Heart left ventricle (tissue), 16 donors: ENCODE measurements at regions of chr2 and their contacts with region 1.

Region 1: GRCh38 chr2:136025057-136025973 is 39.9 kb upstream of the DARS1 start:
- DNase-seq: peak; percentile 82 to 86 (median 84)
- ATAC-seq: peak; percentile 93 to 99 (median 98)
- H3K4me3 ChIP-seq: peak overlapping the region in 7 of 12 donors; percentile 0 to 34 (median 18)
- H3K27ac ChIP-seq: peak overlapping the region in 7 of 12 donors; percentile 17 to 63 (median 31)
- H3K4me1 ChIP-seq: peaks cover 0 to 20% (median 2%) of the 10 kb centered on the region in 12 donors
- H3K27me3 ChIP-seq: no peaks in the 10 kb centered on the region
- CTCF ChIP-seq: no peak
- POLR2A ChIP-seq: no peak

Region 2: GRCh38 chr2:135985018-135985825 is 40.1 kb before region 1 on chr2 and contains the start of gene DARS1:
- intact Hi-C with region 1: loop called in 1 of 10 experiments (anchors 5 kb)
- DNase-seq: peak; percentile 94 to 97 (median 95)
- ATAC-seq: peak; percentile 96 to 99 (median 98)
- H3K4me3 ChIP-seq: peak within 1 kb of the TSS; percentile 71 to 98 (median 86)
- H3K27ac ChIP-seq: peak within 1 kb of the TSS; percentile 92 to 100 (median 96)
- H3K4me1 ChIP-seq: peaks cover 0 to 40% (median 19%) of the 10 kb centered on the region in 12 donors
- H3K27me3 ChIP-seq: no peaks in the 10 kb centered on the region
- CTCF ChIP-seq: no peak
- POLR2A ChIP-seq: peak in 1 of 2 donors; percentile 60
- total RNA-seq, gene DARS1: 51.2 to 64.4 (median 55.0) TPM

Region 3: DNA sequence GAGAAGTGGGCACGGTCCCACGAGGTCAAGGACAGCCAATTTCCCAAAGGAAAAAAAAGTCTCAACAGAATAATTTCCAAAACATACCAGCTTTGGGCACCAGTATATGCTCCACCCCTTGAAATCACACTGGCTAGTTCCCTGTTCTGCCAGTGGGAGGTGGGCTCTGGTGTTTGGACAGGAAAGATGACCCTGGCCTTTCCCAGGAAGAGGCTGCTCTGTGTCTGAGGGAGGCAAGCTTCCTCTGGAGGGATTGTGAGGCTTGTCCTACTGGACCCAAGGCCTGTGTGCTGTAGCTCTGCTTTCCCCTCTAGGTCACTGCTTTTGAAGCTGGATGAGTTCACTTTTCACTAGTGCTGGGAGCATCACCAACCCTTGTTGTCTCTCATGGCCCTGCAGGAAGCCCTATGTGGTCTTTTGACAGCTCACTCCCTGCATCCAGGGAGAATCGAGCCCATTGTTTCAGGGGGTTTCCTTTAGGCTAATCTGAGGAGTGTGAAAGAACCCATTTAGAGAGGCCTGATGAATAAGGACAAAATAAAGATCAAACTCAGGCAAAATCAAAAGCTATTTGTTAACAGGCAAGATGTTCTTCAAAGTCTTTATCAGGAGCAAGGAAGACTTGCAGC is 56.4 kb after region 1 on chr2:
- intact Hi-C with region 1: no loop called
- DNase-seq: no peak
- ATAC-seq: no peak
- H3K4me3 ChIP-seq: no peak overlapping the region
- H3K27ac ChIP-seq: no peak overlapping the region
- H3K4me1 ChIP-seq: no peaks in the 10 kb centered on the region
- H3K27me3 ChIP-seq: no peaks in the 10 kb centered on the region
- CTCF ChIP-seq: no peak
- POLR2A ChIP-seq: no peak

Region 4: GRCh38 chr2:136207030-136207623 is 181.8 kb after region 1 on chr2:
- intact Hi-C with region 1: no loop called
- DNase-seq: peak in 1 of 5 donors; percentile 43
- ATAC-seq: no peak
- H3K4me3 ChIP-seq: no peak overlapping the region
- H3K27ac ChIP-seq: peak overlapping the region in 1 of 12 donors; percentile 66
- H3K4me1 ChIP-seq: peaks cover 0 to 45% (median 0%) of the 10 kb centered on the region in 12 donors
- H3K27me3 ChIP-seq: peaks cover 0 to 4% (median 0%) of the 10 kb centered on the region in 9 donors
- CTCF ChIP-seq: no peak
- POLR2A ChIP-seq: no peak